OCI-LY7 (cell line): ENCODE measurements at regions of chr5 and their contacts with region 1.

Region 1: DNA sequence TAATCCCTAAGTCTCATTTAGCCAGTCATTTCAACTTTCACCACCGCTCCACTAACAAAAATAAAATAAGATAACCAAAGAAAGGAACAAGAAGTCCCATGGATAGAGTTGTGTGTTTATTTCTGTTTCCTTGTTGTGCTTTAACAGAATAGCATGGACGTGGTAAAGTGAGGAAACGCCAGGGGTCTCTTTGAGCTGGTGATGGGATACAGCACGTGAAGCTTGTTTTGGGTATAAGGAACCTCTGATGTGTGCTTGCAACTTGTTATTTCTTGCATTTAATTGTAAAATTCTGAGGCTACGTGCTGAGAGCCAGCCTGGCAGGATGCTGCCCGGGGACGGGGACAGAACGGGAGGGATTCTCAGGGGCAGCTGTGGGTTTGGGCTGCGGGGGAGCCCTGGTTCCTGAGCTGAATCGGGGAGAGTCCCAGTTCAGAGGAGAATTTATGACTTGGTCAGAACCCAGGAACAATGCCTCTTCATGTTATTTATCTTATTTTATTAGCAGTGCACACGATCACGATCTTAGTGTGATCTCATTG is 63.4 kb downstream of the ANKRD33B start:
- DNase-seq: no peak
- H3K4me3 ChIP-seq: peak overlapping the region; percentile 60
- H3K27ac ChIP-seq: peak overlapping the region; percentile 53
- H3K4me1 ChIP-seq: peaks cover 41% of the 10 kb centered on the region
- CTCF ChIP-seq: no peak

Region 2: DNA sequence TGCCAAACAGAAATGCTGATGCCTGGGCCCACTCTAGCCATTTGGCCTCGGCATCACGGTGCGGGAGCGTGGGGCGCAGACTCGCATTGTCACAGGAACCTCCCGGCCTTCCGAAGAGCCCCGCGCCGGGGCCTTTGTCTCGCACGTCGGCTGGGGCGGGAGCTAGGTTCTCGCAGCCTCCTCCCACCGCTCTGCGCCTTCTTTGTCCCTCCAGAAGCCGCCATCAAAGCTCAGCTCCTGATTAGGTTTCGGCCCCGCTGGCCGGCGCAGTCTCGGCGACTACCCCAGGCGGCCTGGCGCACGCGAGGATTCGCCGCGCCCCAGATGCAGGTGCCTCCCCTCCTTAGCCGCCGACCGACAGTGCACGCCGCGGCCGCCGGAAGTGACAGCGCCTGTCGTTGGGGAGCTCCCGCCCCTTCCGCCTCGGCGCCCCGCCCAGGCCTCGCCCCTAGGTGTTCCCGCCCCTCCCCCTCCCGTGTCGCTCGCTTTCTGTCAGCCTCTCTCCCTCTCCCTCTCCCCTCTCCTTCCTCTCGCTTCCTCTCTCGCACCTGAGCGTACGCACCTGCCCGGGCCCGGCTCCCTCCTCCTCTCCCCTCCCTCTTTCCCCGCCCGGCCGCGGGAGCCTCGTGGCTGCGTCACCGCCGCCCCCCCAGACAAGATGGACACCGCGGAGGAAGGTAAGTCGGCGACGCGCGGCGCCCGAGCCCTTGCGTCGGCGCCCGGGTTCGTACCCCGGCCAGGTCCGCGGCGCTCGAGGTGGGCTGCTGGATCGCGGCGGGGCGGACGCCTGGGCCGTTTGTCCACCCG is 273.8 kb before region 1 on chr5 and contains the start of gene MARCHF6:
- CTCF ChIA-PET with region 1: no interaction called
- POLR2A ChIA-PET with region 1: interaction called, 3 read pairs
- intact Hi-C with region 1: loop called (anchors 5 kb)
- DNase-seq: peak; percentile 97
- H3K4me3 ChIP-seq: peak within 1 kb of the TSS; percentile 88
- H3K27ac ChIP-seq: peak within 1 kb of the TSS; percentile 88
- H3K4me1 ChIP-seq: peaks cover 40% of the 10 kb centered on the region
- CTCF ChIP-seq: no peak
- total RNA-seq, gene MARCHF6: 48.2 and 118 TPM in 2 replicates

Region 3: DNA sequence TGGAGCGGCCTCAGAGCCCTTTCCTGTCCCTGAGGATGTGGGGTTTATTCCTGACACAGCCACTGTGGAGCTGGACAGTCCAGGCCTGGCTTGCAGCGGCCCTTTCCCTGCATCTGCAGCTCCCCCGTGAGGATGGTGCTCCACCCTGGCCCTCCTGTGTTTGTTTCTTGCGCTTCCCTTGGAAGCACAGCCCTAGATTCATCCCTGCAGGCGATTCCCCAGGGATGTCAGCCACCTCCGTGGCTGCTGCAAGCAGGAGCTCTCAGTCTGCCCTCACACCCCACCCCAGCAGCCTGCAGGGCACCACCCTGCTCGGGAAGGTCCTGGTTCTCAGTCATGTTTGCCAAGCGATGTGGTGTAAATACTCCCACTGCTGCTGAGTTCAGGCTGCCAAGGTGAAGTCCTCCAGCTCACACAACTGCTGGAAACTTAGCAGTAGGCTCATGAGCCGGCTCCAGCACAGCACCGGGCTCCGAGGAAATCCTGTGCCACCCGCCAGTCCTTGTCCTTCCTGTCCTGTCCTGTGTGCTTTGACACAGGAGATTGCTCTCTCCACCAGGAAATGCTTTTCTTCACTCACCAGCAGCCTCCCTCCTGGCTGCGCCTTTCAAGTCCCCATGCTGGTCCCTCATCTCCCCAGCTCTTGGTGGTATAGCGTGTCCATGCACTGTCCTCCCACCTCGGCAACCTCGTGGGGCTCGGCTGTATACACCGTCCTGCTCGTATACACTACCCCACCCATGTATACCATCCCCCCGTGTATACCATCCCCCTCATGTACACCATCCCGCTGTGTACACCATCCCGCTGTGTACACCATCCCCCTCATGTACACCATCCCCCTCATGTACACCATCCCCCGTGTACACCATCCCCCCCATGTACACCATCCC is 169.3 kb before region 1 on chr5:
- CTCF ChIA-PET with region 1: interaction called, 16 read pairs
- POLR2A ChIA-PET with region 1: interaction called, 12 read pairs
- intact Hi-C with region 1: no loop called
- DNase-seq: no peak
- H3K4me3 ChIP-seq: no peak overlapping the region
- H3K27ac ChIP-seq: no peak overlapping the region
- H3K4me1 ChIP-seq: peaks cover 3% of the 10 kb centered on the region
- CTCF ChIP-seq: no peak

Region 4: DNA sequence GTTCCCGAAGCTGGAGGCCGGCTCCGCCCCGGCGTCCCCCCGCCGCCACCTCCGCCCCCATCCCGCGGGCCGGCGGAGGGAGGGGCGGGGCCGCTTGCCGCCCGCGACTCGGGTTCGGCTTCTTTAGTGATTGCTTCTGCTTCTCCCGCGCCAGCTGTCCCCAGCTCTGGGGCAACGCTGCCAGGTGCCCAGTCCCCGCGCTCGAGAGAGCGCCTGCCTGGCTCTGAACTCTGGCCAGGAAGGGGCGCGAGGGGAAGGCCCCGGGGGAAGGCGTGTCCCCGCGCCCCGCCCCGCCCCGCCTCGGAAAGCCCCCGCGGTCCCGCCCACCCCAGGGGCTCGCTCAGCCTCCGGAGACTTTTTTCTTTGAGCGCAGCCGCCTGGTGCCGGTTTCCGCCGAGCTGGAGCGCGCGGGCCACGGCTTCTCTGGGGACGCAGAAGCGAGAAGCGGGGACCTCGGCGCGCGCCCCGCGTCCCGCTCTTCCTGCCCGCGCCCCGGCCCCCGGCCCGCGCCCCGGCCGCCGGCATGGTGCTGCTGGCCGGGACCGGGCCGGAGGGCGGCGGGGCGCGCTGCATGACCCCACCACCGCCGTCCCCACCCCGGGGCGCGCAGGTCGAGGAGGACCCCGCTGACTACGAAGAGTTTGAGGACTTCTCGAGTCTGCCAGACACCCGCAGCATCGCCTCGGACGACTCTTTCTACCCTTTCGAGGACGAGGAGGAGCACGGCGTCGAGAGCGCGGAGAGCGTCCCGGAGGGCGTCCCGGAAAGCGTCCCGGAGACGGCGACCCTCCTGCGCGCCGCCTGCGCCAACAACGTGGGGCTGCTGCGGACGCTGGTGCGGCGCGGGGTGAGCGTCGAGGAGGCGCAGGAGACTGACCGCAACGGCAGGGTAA is 63.0 kb before region 1 on chr5 and contains the start of gene ANKRD33B:
- CTCF ChIA-PET with region 1: interaction called, 4 read pairs
- POLR2A ChIA-PET with region 1: interaction called, 8 read pairs
- intact Hi-C with region 1: loop called (anchors 1 kb)
- DNase-seq: peak; percentile 91
- H3K4me3 ChIP-seq: peak within 1 kb of the TSS; percentile 78
- H3K27ac ChIP-seq: peak within 1 kb of the TSS; percentile 20
- H3K4me1 ChIP-seq: peaks cover 50% of the 10 kb centered on the region
- CTCF ChIP-seq: no peak
- total RNA-seq, gene ANKRD33B: 5.6 TPM in 2 replicates

Region 5: DNA sequence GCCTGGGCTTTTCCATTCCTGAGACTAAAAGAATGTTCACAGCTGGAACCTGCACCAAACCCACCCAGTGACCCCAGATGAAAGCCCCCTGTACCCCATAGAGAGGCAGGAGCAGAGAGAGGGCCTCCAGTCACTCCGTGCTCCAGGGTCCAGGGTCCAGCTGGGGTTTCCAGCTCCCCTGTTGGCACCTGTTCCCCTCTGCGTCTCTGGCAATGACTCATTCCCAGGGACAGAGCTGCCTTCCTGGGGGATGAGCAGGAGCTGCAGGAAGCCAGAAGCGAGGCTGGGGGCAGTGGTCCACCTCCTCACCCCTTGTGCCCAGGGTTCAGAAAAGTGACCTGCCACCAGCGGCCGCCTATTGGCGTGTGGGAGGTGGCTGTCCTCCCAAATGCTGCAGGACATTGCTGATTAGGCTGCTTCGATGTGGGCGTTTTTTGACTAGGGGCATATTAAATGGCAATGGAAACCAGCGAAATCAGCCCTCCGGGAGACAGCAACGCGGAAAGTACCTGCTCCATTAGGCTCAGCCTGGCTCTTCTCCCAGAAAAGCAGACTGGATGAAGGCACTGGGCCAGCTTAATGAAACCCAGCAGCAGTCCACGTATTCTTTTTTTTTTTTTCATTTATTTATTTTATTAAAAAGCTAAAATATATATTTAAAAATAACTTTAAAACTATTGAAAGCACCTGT is 36.4 kb after region 1 on chr5:
- CTCF ChIA-PET with region 1: no interaction called
- POLR2A ChIA-PET with region 1: no interaction called
- intact Hi-C with region 1: no loop called
- DNase-seq: no peak
- H3K4me3 ChIP-seq: no peak overlapping the region
- H3K27ac ChIP-seq: no peak overlapping the region
- H3K4me1 ChIP-seq: no peaks in the 10 kb centered on the region
- CTCF ChIP-seq: no peak